ENCODE measurements at regions of chr20 and their contacts with region 1.

Region 1: DNA sequence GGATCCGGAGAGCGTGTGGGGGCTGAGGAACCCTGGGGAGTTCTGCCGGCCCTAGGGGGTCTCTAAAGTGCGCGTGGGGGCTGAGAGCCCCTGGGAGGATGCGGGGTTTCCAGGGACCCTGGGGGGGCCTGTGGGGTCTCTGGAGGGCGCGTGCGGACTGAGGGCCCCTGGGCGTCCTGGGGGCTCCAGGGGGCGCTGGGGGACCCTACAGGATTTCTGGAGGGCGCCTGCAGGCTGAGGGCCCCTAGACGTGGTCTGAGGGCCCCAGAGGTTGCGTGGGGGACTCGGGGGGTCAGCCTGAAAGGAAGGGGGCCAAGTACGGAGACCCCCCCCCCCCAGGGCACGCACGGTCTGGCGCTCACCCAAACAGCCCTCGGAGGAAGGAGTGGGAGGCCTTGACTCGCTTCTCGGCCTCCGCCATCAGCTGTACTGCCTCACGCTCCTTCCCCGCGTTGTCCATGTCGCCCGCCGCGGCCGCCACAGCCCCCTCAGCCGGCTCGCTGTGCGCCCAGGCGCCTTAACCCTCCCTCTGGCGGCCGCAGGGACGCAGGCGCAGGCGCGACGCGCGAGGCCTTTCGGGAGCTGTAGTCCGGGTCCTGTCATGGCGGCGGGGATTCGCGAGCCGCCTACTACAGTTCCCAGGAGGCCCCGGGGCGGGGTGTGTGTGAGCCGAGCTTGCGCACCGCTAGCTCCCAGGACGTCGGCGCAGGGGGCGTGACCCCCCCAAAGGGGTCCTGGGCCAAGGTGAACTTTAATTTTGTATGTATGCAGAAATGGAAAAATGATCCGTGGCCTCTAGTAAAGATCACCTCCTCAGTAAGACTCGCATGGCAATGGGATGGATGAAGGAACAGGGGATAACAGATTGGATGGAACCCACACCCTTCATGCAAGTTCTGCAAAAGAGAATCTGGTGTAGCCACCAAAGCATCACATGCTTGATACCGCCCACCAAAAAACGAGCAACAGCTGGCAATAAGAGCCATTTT is at the start of gene NAPB:
- DNase-seq: peak; percentile 87 to 95 (median 89)
- H3K4me3 ChIP-seq: peak within 1 kb of the TSS; percentile 82
- H3K4me3 Mint-ChIP-seq: peak within 1 kb of the TSS; percentile 89 to 94 (median 90)
- H3K27ac ChIP-seq: peak within 1 kb of the TSS; percentile 76
- H3K27ac Mint-ChIP-seq: peak within 1 kb of the TSS; percentile 21 to 96 (median 90)
- H3K4me1 ChIP-seq: peaks cover 18% of the 10 kb centered on the region
- H3K4me1 Mint-ChIP-seq: peaks cover 40 to 46% (median 46%) of the 10 kb centered on the region in 3 donors
- H3K27me3 ChIP-seq: no peaks in the 10 kb centered on the region
- H3K27me3 Mint-ChIP-seq: peaks cover 4 to 18% of the 10 kb centered on the region in 2 donors
- total RNA-seq, gene NAPB: 7.4 to 7.6 TPM

Region 2: DNA sequence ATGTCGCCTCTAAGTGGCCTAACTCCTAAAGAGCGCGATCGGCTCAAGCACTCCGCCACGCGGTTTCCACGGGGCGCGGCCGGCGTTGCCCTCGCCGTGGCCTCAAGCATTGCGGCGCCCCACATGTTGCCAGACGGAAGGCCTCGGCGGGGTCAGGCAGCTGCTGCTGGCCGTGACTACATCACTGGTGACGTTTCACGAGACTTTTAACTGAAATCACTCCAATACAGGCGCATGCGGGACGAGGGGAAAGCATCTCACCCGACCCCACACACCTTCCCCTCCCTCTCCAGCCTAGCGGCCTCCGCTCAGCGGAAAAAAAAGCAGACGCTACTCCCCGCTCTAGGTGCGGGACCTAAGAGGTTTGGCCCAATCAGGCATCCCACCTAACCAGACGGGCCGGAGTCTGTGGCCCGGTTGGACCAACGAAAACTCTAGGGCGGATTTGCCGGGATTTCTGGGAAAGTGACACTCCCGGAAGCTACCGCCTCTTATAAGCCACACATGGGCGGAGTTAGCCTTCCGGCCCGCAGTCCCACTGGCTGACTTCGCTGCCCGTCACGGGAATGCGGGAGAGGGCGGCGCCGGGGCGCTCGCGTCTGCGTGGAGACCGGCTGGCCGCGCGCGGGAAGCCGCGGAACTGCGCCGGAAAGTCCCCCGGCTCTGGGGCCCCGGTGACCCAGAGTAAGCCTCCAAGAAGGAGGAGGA is 70.9 kb before region 1 on chr20 and contains the start of gene NXT1:
- CTCF ChIA-PET with region 1: interaction called, 42 read pairs
- POLR2A ChIA-PET with region 1: interaction called, 32 read pairs
- DNase-seq: peak; percentile 90 to 97 (median 96)
- H3K4me3 ChIP-seq: peak within 1 kb of the TSS; percentile 98
- H3K4me3 Mint-ChIP-seq: peak within 1 kb of the TSS; percentile 94 to 99 (median 98)
- H3K27ac ChIP-seq: peak within 1 kb of the TSS; percentile 100
- H3K27ac Mint-ChIP-seq: peak within 1 kb of the TSS; percentile 99 to 100 (median 100)
- H3K4me1 ChIP-seq: peaks cover 21% of the 10 kb centered on the region
- H3K4me1 Mint-ChIP-seq: peaks cover 22 to 24% (median 23%) of the 10 kb centered on the region in 3 donors
- H3K27me3 ChIP-seq: no peaks in the 10 kb centered on the region
- H3K27me3 Mint-ChIP-seq: peaks cover 0 to 7% of the 10 kb centered on the region in 2 donors
- total RNA-seq, gene NXT1: 48.9 to 52.9 TPM

Region 3: DNA sequence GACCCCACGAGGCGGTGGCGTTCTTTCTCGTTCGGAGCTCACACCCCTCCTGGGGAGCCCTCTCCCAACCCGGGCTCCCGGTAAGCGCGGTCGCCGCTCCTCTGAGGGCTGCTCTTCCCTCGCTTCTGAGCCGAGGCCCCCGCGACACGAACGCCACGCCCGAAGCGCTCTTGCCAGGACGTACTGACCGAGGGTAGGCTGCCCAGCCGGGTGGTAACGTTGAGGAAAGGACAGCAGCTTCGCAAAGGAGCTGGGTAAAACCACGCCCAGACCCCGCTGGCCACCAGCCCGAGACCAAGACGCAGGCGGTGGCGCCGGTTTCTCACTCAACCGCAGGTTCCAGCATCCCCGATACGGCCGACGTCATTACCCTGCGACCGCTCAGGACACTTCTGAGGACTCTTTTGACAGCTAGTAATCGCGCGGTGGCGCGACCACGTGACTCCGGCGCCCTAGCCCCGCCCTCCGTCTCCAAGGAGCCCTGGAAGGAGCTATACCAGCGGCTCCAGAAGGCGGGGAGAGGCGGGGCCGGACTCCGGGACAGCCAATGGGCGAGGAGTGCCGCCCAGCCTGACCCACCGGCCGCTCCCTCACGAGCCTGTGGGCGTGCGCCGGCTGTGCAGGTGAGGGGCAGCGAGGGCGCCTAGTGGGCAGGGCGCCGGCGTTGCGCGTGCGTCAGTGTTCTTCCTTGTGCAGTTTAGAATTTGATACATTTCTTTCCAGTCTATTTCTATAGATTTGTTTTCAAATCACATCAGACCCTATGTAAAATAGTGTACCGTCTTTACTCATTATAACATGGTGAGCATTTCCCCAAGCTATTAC is 63.3 kb before region 1 on chr20:
- CTCF ChIA-PET with region 1: interaction called, 11 read pairs
- POLR2A ChIA-PET with region 1: interaction called, 30 read pairs
- DNase-seq: peak; percentile 99 to 100 (median 99)
- H3K4me3 ChIP-seq: peak overlapping the region; percentile 81
- H3K4me3 Mint-ChIP-seq: peak overlapping the region; percentile 92 to 100 (median 96)
- H3K27ac ChIP-seq: peak overlapping the region; percentile 91
- H3K27ac Mint-ChIP-seq: peak overlapping the region; percentile 97 to 100 (median 99)
- H3K4me1 ChIP-seq: peaks cover 17% of the 10 kb centered on the region
- H3K4me1 Mint-ChIP-seq: peaks cover 26 to 39% (median 32%) of the 10 kb centered on the region in 3 donors
- H3K27me3 ChIP-seq: no peaks in the 10 kb centered on the region
- H3K27me3 Mint-ChIP-seq: peaks cover 0 to 6% of the 10 kb centered on the region in 2 donors

Measured in CD8-positive, alpha-beta memory T cell (primary cell).